ENCODE measurements at regions of chr2 and their contacts with region 1.

Region 1: GRCh38 chr2:118032169-118033013 is 18.5 kb upstream of the CCDC93 start:
- DNase-seq: peak; percentile 52
- H3K4me3 Mint-ChIP-seq: no peak overlapping the region
- H3K27ac Mint-ChIP-seq: no peak overlapping the region
- H3K4me1 Mint-ChIP-seq: no peaks in the 10 kb centered on the region
- H3K27me3 Mint-ChIP-seq: peaks cover 33% of the 10 kb centered on the region

Region 2: GRCh38 chr2:117814417-117815264 is 217.8 kb before region 1 on chr2 and contains the start of gene DDX18:
- CTCF ChIA-PET with region 1: no interaction called
- POLR2A ChIA-PET with region 1: no interaction called
- intact Hi-C with region 1: no loop called
- DNase-seq: peak; percentile 98
- H3K4me3 Mint-ChIP-seq: peak within 1 kb of the TSS; percentile 92
- H3K27ac Mint-ChIP-seq: peak within 1 kb of the TSS; percentile 95
- H3K4me1 Mint-ChIP-seq: peaks cover 35% of the 10 kb centered on the region
- H3K27me3 Mint-ChIP-seq: no peaks in the 10 kb centered on the region
- total RNA-seq, gene DDX18: 118 to 124 TPM

Region 3: GRCh38 chr2:118061135-118061955 is 29.0 kb after region 1 on chr2:
- CTCF ChIA-PET with region 1: interaction called, 28 read pairs
- POLR2A ChIA-PET with region 1: no interaction called
- intact Hi-C with region 1: loop called (anchors 2 kb)
- DNase-seq: no peak
- H3K4me3 Mint-ChIP-seq: no peak overlapping the region
- H3K27ac Mint-ChIP-seq: no peak overlapping the region
- H3K4me1 Mint-ChIP-seq: peaks cover 12% of the 10 kb centered on the region
- H3K27me3 Mint-ChIP-seq: peaks cover 23% of the 10 kb centered on the region

Region 4: DNA sequence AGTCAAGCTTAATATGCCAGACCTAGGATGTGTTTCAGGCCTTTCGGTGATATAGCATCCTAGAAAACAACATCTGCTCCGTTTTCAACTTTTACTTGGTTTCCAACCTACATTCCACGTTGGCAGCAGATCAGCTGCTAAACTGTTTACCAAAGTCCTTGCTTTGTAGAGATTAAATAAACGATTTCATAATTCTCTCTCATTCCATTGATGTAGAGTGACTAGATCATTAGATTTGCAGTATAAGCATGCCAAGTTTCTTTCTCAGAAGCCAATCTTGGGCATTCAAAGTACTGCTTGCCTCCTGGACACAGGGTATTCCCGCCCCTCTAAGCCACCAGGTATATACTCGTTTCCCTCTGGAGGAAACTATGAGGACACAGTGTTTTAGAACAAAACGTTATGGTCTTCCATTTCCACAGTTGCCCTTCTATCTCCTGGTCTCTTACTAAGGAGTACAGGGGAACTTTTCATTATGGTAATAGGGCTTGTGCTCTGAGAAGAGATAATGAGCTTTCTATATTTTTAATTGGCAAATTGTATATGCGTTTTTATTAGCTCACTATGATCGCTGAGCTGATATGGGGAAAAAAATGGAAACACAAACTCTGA is 45.4 kb after region 1 on chr2:
- CTCF ChIA-PET with region 1: interaction called, 10 read pairs
- POLR2A ChIA-PET with region 1: no interaction called
- intact Hi-C with region 1: no loop called
- DNase-seq: no peak
- H3K4me3 Mint-ChIP-seq: no peak overlapping the region
- H3K27ac Mint-ChIP-seq: no peak overlapping the region
- H3K4me1 Mint-ChIP-seq: no peaks in the 10 kb centered on the region
- H3K27me3 Mint-ChIP-seq: peaks cover 6% of the 10 kb centered on the region

Measured in activated CD4-positive, alpha-beta memory T cell treated with anti-CD3 and anti-CD28 coated beads for 36 hours (primary cell).